ENCODE measurements at regions of chr3 and their contacts with region 1.

Region 1: DNA sequence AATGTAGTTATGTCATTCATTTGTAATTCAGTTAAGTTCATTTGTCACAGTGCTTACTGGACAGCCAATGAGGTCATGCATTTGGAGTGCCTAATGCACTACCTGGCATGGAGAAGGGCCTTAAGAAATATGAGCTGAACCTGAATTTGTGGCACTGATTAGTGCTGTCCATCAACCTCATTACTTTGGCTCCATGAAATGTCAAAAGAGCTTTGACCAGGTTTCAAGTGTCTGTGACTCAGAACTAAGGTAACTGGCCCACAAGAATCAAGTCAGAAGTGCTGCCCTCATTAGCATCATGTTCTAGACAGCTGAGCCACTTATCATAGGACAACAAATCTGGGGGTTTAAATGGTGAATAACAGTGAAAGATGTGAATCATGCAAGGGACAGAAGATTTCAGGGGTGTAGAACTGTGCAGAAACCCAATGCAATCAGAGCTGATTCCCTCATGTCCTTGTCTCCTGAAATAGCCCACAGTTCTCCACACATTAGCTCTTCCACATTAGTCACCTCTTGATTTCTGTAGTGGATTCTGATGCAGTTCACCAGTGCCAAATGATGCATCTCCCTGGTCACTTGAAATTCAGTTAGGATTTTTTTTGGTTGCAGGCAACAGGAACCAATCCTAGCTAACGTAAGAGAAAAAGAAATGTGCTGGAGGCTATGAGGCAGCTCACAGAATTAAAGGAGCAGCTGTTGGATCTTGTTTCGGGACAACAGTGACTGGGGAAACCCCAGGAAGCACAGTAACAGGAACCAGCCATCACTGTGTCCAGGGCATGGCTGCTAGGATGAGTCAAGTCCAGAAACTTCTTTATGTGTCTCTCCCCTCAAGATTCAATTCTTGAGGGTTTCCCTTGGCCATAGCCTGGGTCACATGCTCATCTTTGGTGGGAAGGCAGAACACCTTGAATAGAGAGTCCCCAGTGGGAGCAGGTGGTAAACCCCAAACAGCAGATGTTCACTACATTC is 38.7 kb downstream of the CHST2 start:
- DNase-seq: no peak
- ATAC-seq: no peak
- H3K4me3 ChIP-seq: no peak overlapping the region
- H3K4me3 Mint-ChIP-seq: no peak overlapping the region
- H3K27ac ChIP-seq: no peak overlapping the region
- H3K27ac Mint-ChIP-seq: no peak overlapping the region
- H3K4me1 ChIP-seq: peaks cover 9% of the 10 kb centered on the region
- H3K4me1 Mint-ChIP-seq: peaks cover 17% of the 10 kb centered on the region
- H3K27me3 ChIP-seq: no peaks in the 10 kb centered on the region
- H3K27me3 Mint-ChIP-seq: no peaks in the 10 kb centered on the region
- CTCF ChIP-seq: no peak

Region 2: DNA sequence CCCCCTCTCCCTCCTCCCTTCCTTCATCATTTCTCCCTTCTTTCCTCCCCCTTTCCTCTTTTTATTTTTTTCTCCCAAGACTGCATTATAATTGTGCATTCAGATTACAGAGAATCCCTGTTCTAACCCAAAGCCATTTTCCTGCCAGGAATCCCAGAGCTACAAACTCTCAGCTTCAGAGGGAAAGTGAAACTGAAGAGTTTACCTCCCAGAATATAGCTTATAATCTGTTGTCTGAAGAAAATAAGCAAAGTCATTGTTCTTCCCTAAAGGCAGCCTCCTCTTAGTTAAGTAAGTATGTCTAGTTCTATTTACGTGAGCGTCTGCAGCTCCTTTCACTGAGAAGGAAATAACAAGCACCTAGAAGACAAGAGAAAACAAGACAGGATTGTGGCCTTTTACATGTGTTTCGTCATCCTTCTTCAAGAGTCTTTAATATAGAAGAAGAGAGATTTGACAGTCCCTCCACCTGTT is 58.4 kb after region 1 on chr3:
- CTCF ChIA-PET with region 1: no interaction called
- POLR2A ChIA-PET with region 1: no interaction called
- intact Hi-C with region 1: loop called in 1 of 2 experiments (anchors 10 kb)
- DNase-seq: peak in 1 of 9 experiments; percentile 31
- ATAC-seq: peak; percentile 90
- H3K4me3 ChIP-seq: no peak overlapping the region
- H3K4me3 Mint-ChIP-seq: peak overlapping the region; percentile 79
- H3K27ac ChIP-seq: no peak overlapping the region
- H3K27ac Mint-ChIP-seq: peak overlapping the region; percentile 89
- H3K4me1 ChIP-seq: peaks cover 7% of the 10 kb centered on the region
- H3K4me1 Mint-ChIP-seq: peaks cover 24% of the 10 kb centered on the region
- H3K27me3 ChIP-seq: no peaks in the 10 kb centered on the region
- H3K27me3 Mint-ChIP-seq: no peaks in the 10 kb centered on the region
- CTCF ChIP-seq: no peak

Region 3: GRCh38 chr3:143363276-143363675 is 205.0 kb after region 1 on chr3:
- CTCF ChIA-PET with region 1: no interaction called
- POLR2A ChIA-PET with region 1: no interaction called
- intact Hi-C with region 1: loop called in 1 of 2 experiments (anchors 10 kb)
- DNase-seq: peak in 2 of 9 experiments; percentile 2 to 36
- ATAC-seq: no peak
- H3K4me3 ChIP-seq: no peak overlapping the region
- H3K4me3 Mint-ChIP-seq: peak overlapping the region; percentile 27
- H3K27ac ChIP-seq: no peak overlapping the region
- H3K27ac Mint-ChIP-seq: peak overlapping the region; percentile 12
- H3K4me1 ChIP-seq: peaks cover 18% of the 10 kb centered on the region
- H3K4me1 Mint-ChIP-seq: peaks cover 22% of the 10 kb centered on the region
- H3K27me3 ChIP-seq: no peaks in the 10 kb centered on the region
- H3K27me3 Mint-ChIP-seq: no peaks in the 10 kb centered on the region
- CTCF ChIP-seq: no peak

Region 4: GRCh38 chr3:143510601-143511000 is 352.3 kb after region 1 on chr3:
- CTCF ChIA-PET with region 1: no interaction called
- POLR2A ChIA-PET with region 1: no interaction called
- intact Hi-C with region 1: no loop called
- DNase-seq: no peak
- ATAC-seq: no peak
- H3K4me3 ChIP-seq: no peak overlapping the region
- H3K4me3 Mint-ChIP-seq: no peak overlapping the region
- H3K27ac ChIP-seq: no peak overlapping the region
- H3K27ac Mint-ChIP-seq: no peak overlapping the region
- H3K4me1 ChIP-seq: no peaks in the 10 kb centered on the region
- H3K4me1 Mint-ChIP-seq: no peaks in the 10 kb centered on the region
- H3K27me3 ChIP-seq: no peaks in the 10 kb centered on the region
- H3K27me3 Mint-ChIP-seq: no peaks in the 10 kb centered on the region
- CTCF ChIP-seq: no peak

Measured in CD8-positive, alpha-beta T cell (primary cell).